ENCODE measurements at regions of chr7 and their contacts with region 1.

Region 1: DNA sequence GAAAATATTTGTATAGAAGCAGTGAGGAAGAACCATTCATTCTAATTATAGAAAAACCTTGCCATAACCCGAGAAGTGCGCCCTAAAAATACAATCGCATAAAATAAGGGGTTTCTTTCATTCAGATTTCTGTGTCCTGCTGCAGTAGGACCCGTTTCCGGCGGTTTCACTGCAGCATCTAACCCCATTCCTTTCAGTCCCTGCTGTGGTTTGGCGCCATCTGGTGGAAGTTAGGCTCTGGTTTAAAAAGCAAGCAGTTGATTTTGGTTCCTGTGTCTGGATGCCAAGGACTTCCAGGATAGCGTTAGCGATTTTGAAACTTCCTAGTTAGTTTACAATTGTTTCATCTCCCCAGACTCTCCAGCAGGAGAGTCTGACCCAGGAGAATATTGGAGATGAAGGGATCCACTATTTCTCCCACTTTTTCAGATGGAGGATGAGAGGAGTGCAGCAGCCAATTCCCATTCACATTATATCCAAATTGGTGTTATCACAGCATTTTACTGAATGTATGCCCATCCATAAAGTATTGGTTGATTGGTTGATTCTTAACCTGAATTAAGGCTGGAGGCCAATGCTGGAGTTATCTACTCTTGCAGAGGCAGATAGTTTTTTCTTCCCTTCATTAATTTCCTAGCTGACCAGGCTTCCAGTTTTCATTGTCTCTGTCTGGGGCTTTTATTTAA is 128.8 kb upstream of the CACNA2D1 start:
- DNase-seq: peak; percentile 94
- H3K4me3 ChIP-seq: peak overlapping the region in 1 of 4 donors; percentile 1
- H3K27ac ChIP-seq: no peak overlapping the region
- H3K4me1 ChIP-seq: peaks cover 7 to 13% (median 9%) of the 10 kb centered on the region in 4 donors
- H3K27me3 ChIP-seq: no peaks in the 10 kb centered on the region
- CTCF ChIP-seq: peak; percentile 82 to 95 (median 89)
- EP300 ChIP-seq: no peak
- POLR2A ChIP-seq: no peak

Region 2: DNA sequence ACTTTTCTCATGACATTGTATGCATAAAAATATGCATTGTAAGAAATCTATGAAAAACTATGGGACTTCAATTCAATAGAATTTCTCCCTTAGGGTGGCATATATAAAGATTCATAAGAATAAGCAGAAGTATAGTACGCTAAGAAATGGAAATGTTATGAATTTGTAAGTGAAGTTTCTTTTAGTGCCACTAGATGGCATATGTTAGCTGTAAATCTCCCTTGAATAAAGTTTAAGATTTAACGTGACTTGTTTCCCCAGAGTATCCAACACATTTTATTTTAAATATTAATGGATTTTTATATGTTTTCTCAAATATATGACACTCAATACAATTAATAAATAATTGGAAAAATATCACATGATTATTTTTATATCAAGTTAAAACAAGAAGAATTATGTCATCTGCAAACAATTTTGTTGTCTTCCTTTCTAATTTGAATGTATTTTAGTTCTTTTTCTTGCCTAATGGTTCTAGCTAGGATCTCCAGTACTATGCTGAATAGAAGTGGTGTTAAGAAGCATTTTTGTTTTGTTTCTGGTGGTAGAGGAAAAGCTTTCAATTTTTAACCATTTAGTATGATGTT is 1089.6 kb before region 1 on chr7:
- intact Hi-C with region 1: loop called (anchors 5 kb)
- DNase-seq: no peak
- H3K4me3 ChIP-seq: no peak overlapping the region
- H3K27ac ChIP-seq: no peak overlapping the region
- H3K4me1 ChIP-seq: peaks cover 0 to 17% (median 8%) of the 10 kb centered on the region in 4 donors
- H3K27me3 ChIP-seq: no peaks in the 10 kb centered on the region
- CTCF ChIP-seq: peak; percentile 60 to 70 (median 66)
- EP300 ChIP-seq: no peak
- POLR2A ChIP-seq: no peak